ENCODE measurements at regions of chr4 and their contacts with region 1.

Region 1: DNA sequence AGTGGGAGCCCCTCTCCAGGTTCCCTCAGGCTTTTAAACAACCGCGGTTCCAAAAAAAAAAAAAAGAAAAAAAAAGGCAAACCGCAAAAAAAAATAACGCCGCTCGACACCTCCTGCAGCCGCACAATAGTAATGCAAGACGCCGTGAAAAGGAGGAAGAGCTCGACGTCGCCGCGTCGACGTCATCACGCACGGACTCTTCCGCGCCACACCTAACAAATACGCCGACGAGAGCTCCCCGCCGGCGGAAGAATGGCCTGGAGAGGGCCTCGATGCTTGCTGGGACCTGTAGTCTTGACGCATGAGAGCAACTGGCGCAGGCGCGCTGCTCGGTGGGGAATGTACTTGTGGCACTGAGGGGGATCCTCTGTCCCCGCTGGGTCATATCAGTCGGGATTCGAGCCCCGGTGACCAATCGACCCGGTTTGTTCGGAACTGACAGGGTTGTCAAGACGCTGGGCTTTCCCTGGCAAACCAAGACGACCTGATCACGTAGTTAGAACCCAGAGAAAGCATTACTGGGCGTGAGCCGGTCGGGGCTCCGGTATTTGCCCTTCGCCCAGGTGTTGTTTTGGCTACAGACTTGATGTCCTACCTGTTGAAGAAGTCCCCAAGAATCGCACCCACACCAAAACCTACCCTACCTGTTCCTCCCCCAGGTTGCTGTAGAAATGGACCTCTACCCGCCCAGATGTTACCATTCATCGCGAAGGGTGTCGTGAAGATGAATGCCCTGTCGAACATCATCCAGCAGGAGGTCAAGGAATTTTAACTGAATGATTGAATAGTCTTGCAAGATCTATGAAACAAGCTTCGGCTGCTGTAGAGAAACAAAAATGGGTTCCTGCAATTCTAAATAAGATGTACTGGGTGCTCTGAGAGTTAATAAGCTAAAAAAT is at the start of gene CBR4:
- DNase-seq: peak; percentile 96
- H3K4me3 Mint-ChIP-seq: peak within 1 kb of the TSS; percentile 95
- H3K27ac Mint-ChIP-seq: peak within 1 kb of the TSS; percentile 87
- H3K4me1 Mint-ChIP-seq: peaks cover 27% of the 10 kb centered on the region
- H3K27me3 Mint-ChIP-seq: no peaks in the 10 kb centered on the region
- total RNA-seq, gene CBR4: 12.7 to 14.7 TPM

Region 2: GRCh38 chr4:168318266-168318895 is 692.0 kb before region 1 on chr4 and contains the start of gene DDX60:
- CTCF ChIA-PET with region 1: interaction called, 4 read pairs
- POLR2A ChIA-PET with region 1: interaction called, 15 read pairs
- DNase-seq: peak; percentile 91
- H3K4me3 Mint-ChIP-seq: peak within 1 kb of the TSS; percentile 94
- H3K27ac Mint-ChIP-seq: peak within 1 kb of the TSS; percentile 97
- H3K4me1 Mint-ChIP-seq: peaks cover 58% of the 10 kb centered on the region
- H3K27me3 Mint-ChIP-seq: no peaks in the 10 kb centered on the region
- total RNA-seq, gene DDX60: 140 to 147 TPM

Region 3: GRCh38 chr4:168923526-168924194 is 86.7 kb before region 1 on chr4:
- CTCF ChIA-PET with region 1: interaction called, 35 read pairs
- POLR2A ChIA-PET with region 1: interaction called, 3 read pairs
- DNase-seq: peak; percentile 54
- H3K4me3 Mint-ChIP-seq: no peak overlapping the region
- H3K27ac Mint-ChIP-seq: no peak overlapping the region
- H3K4me1 Mint-ChIP-seq: no peaks in the 10 kb centered on the region
- H3K27me3 Mint-ChIP-seq: no peaks in the 10 kb centered on the region

Region 4: DNA sequence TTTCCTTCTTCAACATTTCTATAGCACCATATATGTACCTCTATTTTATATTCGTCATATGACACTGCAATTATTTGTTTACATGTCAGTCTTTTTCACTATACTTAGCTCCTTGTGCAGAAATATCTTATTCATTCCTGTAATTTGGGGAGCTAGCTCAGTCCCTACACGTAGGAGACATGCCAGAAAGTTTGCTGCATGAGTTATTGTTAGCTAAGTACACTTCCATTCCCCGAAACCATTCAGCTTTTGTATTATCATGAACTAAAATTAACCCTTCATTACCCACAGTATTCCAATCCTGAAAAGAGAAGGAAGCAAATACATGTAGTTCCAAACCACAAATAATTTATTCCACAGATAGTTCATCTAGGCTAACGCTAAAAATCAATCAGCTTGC is 10.6 kb before region 1 on chr4:
- CTCF ChIA-PET with region 1: interaction called, 13 read pairs
- POLR2A ChIA-PET with region 1: interaction called, 8 read pairs
- DNase-seq: no peak
- H3K4me3 Mint-ChIP-seq: no peak overlapping the region
- H3K27ac Mint-ChIP-seq: no peak overlapping the region
- H3K4me1 Mint-ChIP-seq: no peaks in the 10 kb centered on the region
- H3K27me3 Mint-ChIP-seq: no peaks in the 10 kb centered on the region

Region 5: GRCh38 chr4:169024762-169025161 is 14.4 kb after region 1 on chr4:
- CTCF ChIA-PET with region 1: interaction called, 12 read pairs
- POLR2A ChIA-PET with region 1: no interaction called
- DNase-seq: no peak
- H3K4me3 Mint-ChIP-seq: no peak overlapping the region
- H3K27ac Mint-ChIP-seq: no peak overlapping the region
- H3K4me1 Mint-ChIP-seq: no peaks in the 10 kb centered on the region
- H3K27me3 Mint-ChIP-seq: peaks cover 7% of the 10 kb centered on the region